Activated T-helper 1 cell treated with anti-CD3 and anti-CD28 coated beads, Interleukin-12 subunit alpha, Interleukin-12 subunit beta, Interleukin-2, Interleukin-4 antibody, amounts not matched to agents 30 ng/mL and 10 ng/mL and 1 ng/mL, durations not matched to agents 14 hours and 24 hours and 36 hours (primary cell): ENCODE measurements at regions of chr3 and their contacts with region 1.

Region 1: GRCh38 chr3:48556793-48557626 is at the start of gene PFKFB4:
- DNase-seq: peak; percentile 100
- H3K4me3 Mint-ChIP-seq: peak within 1 kb of the TSS; percentile 91
- H3K27ac Mint-ChIP-seq: peak within 1 kb of the TSS; percentile 90
- H3K4me1 Mint-ChIP-seq: peaks cover 52% of the 10 kb centered on the region
- H3K27me3 Mint-ChIP-seq: no peaks in the 10 kb centered on the region
- total RNA-seq, gene PFKFB4: 11.7 and 15.5 TPM in 2 replicates

Region 2: DNA sequence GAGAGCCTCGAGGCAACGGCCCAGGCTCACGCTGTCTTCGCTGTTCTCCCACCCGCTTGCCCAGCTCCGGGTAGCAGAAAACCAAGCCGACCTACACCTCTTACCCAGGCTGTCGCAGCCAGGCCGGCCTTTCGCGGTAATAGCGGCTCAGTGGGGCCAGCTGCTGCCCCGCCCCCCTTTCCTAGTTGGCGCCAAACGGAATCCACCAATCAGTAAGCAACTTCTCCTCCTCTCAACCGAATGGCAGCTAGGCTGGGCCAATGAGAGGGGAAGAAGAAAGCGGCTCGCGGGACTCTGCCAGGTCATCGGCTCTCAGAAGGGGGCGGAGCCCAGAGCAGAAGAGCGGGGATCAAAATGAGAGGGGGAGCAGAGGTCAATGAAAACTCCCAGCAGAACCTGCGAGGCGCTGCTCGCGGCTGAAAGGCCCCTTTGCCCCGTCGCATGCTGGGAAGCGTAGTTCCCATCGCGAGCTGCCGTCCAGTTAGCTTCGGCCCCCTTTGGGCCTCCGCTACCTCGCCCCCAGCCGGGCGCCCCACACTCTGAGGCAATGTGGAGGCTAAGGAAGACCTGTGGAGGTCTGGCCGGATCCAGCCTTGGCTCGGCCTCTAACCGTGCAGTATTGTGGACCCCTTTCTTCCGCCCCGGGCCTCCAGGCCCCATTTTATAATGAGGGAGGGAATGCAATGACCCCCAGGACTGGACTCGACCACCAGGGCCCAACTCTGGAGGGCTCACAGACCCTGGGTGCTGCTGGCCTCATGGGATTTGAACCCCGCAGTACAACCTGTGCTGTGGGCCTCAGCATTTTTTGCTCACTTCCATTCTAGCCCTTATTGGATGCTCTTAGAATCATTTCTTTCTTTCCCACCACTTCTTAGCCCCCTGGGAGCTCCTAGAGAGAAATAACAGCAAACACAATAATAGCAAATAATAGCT is 368.5 kb before region 1 on chr3 and contains the start of gene CDC25A:
- intact Hi-C with region 1: loop called (anchors 2 kb)
- DNase-seq: peak; percentile 95
- H3K4me3 Mint-ChIP-seq: peak within 1 kb of the TSS; percentile 96
- H3K27ac Mint-ChIP-seq: peak within 1 kb of the TSS; percentile 92
- H3K4me1 Mint-ChIP-seq: peaks cover 35% of the 10 kb centered on the region
- H3K27me3 Mint-ChIP-seq: peaks cover 6% of the 10 kb centered on the region
- total RNA-seq, gene CDC25A: 50.9 and 52.6 TPM in 2 replicates

Region 3: DNA sequence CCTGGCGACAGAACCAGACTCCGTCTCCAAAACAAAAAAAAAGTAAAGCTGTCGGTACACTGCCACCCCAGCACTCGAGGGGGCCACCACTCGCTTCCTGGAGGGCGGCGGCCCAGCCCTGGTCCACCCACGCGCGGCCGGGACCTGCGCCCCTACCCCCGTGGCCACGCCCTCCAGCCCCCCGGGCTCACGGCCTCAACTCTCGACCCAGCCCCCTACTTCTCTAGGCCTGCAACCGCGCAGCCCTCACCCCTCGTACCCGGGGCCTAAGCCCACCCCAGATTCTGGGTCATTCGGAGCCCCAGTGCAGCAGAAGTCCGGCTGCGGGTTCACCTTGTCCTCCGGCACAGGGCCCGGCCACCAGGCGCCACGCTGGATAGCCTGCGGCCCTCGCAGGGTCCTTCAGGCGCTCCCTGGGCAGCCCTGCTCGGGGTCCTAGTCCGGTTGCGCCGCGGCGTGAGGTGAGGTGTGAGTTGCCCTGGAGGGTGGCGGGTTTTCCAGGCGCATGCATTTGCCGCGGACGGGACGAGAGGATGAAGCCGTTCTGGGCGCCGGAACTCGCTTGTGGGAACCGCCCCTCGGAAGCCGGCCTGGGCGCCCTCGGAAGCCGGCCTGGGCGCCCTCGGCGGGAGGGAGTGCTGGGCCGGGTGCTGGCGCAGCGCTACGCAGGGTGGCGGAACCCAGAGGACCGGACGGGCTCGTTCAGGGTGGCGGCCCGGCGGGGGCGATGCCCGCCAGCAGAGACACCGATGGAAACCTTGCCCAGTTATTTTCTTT is 255.8 kb before region 1 on chr3:
- intact Hi-C with region 1: loop called (anchors 1 kb)
- DNase-seq: peak; percentile 87
- H3K4me3 Mint-ChIP-seq: peak within 1 kb of the TSS; percentile 95
- H3K27ac Mint-ChIP-seq: peak within 1 kb of the TSS; percentile 98
- H3K4me1 Mint-ChIP-seq: peaks cover 52% of the 10 kb centered on the region
- H3K27me3 Mint-ChIP-seq: peaks cover 11% of the 10 kb centered on the region

Region 4: GRCh38 chr3:48472915-48473616 is 83.9 kb before region 1 on chr3:
- intact Hi-C with region 1: loop called (anchors 1 kb)
- DNase-seq: peak; percentile 94
- H3K4me3 Mint-ChIP-seq: peak overlapping the region; percentile 82
- H3K27ac Mint-ChIP-seq: peak overlapping the region; percentile 95
- H3K4me1 Mint-ChIP-seq: peaks cover 64% of the 10 kb centered on the region
- H3K27me3 Mint-ChIP-seq: no peaks in the 10 kb centered on the region

Region 5: DNA sequence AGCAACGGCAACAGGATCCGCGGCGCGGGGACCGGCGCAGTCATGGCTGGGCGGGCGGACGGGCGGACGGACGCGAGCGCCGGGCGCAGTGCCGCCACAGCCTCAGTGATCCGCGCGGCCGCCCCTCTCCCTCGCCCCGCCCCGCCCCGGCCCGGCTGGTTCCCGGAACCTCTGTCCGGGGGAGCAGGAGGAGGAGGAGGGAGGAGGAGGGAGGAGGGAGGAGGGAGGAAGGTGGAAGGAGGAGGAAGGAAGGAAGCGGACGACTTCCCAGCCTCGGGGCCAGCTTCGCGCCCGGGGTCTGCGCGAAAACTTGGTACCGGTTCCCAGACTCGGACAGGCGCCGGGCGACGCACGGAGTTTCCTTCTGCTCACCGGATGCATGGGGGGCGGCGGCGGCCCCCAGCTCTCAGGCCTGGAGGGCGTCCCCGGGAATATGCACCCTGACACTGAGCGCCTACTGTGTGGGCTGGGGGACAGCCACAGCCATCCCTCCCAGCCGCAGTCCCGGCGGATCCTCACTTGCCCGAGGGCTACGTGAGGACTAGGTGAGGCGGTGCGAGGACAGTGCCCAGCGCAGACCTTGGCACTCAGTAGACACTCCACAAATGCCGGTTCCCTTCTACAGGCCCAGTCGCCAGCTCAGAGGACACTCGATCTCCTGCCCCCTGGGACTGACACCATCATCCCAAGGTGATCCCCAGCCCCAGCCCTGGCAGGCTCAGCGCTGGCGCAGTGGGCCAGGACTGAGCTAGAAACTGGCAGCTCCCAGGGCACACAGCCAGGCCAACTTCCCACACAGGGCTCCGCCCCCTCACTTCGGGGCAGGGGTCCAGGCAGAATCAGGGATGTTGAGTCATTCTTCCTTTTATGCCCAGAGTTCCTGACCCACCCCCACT is 52.7 kb before region 1 on chr3 and contains the start of gene SHISA5:
- intact Hi-C with region 1: no loop called
- DNase-seq: peak; percentile 59
- H3K4me3 Mint-ChIP-seq: peak within 1 kb of the TSS; percentile 83
- H3K27ac Mint-ChIP-seq: peak within 1 kb of the TSS; percentile 82
- H3K4me1 Mint-ChIP-seq: peaks cover 64% of the 10 kb centered on the region
- H3K27me3 Mint-ChIP-seq: no peaks in the 10 kb centered on the region
- total RNA-seq, gene SHISA5: 90.1 and 92.5 TPM in 2 replicates

Region 6: DNA sequence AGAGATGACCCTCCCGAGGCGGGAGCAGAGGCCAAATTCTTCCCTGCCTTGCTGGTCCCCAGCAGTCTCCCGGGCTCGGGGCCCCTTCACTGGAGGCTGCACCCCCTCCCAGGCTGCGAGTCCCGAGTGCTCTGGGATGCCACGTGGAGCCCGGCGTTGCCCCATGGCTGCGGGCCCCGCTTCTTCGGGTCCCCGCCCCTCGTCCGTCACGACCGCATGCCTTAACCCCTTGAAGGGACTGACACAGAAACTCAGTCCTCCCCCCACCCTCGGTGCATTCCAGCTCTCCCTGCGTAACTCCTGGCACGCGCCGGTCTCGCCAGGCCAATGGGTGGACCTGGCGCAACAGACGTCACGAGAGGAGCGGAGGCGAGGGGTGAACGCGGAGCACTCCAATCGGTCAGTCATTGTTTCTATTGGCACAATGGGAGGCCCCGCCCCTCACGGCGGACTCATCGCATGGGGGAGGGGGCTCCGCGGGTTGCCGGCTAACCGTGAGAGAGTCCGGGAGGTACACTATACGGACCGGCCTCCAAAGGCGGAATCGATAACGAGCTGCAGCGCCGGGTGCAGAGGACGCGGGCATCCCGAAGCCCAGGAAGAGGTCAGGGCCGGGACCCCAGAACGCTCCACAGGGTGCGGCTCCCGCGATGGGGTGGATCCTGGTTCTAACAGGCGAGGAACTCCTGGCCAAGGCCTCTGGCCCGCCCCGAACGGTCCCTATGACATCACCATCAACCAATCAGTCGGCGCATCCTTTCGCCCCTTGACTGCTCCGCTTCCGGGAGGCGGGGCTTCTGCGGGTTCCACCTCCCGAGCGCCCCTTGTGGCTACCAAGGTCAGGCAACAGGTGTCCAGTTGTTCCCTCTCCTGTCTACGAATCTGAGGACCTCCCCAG is 106.7 kb after region 1 on chr3:
- intact Hi-C with region 1: loop called (anchors 2 kb)
- DNase-seq: peak; percentile 92
- H3K4me3 Mint-ChIP-seq: peak overlapping the region; percentile 95
- H3K27ac Mint-ChIP-seq: peak overlapping the region; percentile 96
- H3K4me1 Mint-ChIP-seq: peaks cover 15% of the 10 kb centered on the region
- H3K27me3 Mint-ChIP-seq: peaks cover 15% of the 10 kb centered on the region

Region 7: GRCh38 chr3:49007068-49007770 is 450.2 kb after region 1 on chr3 and contains the start of gene WDR6:
- intact Hi-C with region 1: loop called (anchors 2 kb)
- DNase-seq: peak; percentile 96
- H3K4me3 Mint-ChIP-seq: peak within 1 kb of the TSS; percentile 98
- H3K27ac Mint-ChIP-seq: peak within 1 kb of the TSS; percentile 100
- H3K4me1 Mint-ChIP-seq: peaks cover 29% of the 10 kb centered on the region
- H3K27me3 Mint-ChIP-seq: no peaks in the 10 kb centered on the region
- total RNA-seq, gene WDR6: 143 and 145 TPM in 2 replicates